ENCODE measurements at regions of chr2 and their contacts with region 1.

Region 1: GRCh38 chr2:165015052-165015642 is 59.8 kb upstream of the SLC38A11 start:
- DNase-seq: peak; percentile 48 to 83 (median 67)
- ATAC-seq: peak; percentile 75 to 93 (median 90)
- H3K4me3 ChIP-seq: no peak overlapping the region
- H3K27ac ChIP-seq: no peak overlapping the region
- H3K4me1 ChIP-seq: peaks cover 0 to 4% (median 0%) of the 10 kb centered on the region in 3 donors
- H3K27me3 ChIP-seq: no peaks in the 10 kb centered on the region
- CTCF ChIP-seq: peak; percentile 58 to 84 (median 78)

Region 2: GRCh38 chr2:164044637-164045036 is 970.5 kb before region 1 on chr2:
- intact Hi-C with region 1: no loop called
- DNase-seq: no peak
- ATAC-seq: peak in 1 of 4 donors; percentile 37
- H3K4me3 ChIP-seq: no peak overlapping the region
- H3K27ac ChIP-seq: no peak overlapping the region
- H3K4me1 ChIP-seq: no peaks in the 10 kb centered on the region
- H3K27me3 ChIP-seq: no peaks in the 10 kb centered on the region
- CTCF ChIP-seq: no peak

Region 3: GRCh38 chr2:164785457-164785856 is 229.7 kb before region 1 on chr2:
- intact Hi-C with region 1: no loop called
- DNase-seq: no peak
- ATAC-seq: peak in 2 of 4 donors; percentile 17 to 27
- H3K4me3 ChIP-seq: no peak overlapping the region
- H3K27ac ChIP-seq: peak overlapping the region in 1 of 4 donors; percentile 51
- H3K4me1 ChIP-seq: peaks cover 6 to 31% (median 25%) of the 10 kb centered on the region in 3 donors
- H3K27me3 ChIP-seq: no peaks in the 10 kb centered on the region
- CTCF ChIP-seq: no peak

Region 4: GRCh38 chr2:165203689-165204559 is 188.8 kb after region 1 on chr2 and contains the start of gene SCN3A:
- intact Hi-C with region 1: loop called in 2 of 3 experiments (anchors 10 kb)
- DNase-seq: peak in 3 of 6 donors; percentile 4 to 28 (median 15)
- ATAC-seq: peak; percentile 38 to 86 (median 74)
- H3K4me3 ChIP-seq: no peak within 1 kb of the TSS
- H3K27ac ChIP-seq: no peak within 1 kb of the TSS
- H3K4me1 ChIP-seq: no peaks in the 10 kb centered on the region
- H3K27me3 ChIP-seq: no peaks in the 10 kb centered on the region
- CTCF ChIP-seq: peak in 3 of 4 donors; percentile 26 to 49 (median 48)
- total RNA-seq, gene SCN3A: 0.08 to 1.2 (median 0.38) TPM

Region 5: GRCh38 chr2:165281387-165281786 is 266.2 kb after region 1 on chr2:
- intact Hi-C with region 1: no loop called
- DNase-seq: no peak
- ATAC-seq: no peak
- H3K4me3 ChIP-seq: no peak overlapping the region
- H3K27ac ChIP-seq: no peak overlapping the region
- H3K4me1 ChIP-seq: no peaks in the 10 kb centered on the region
- H3K27me3 ChIP-seq: no peaks in the 10 kb centered on the region
- CTCF ChIP-seq: no peak

Measured in pancreas (tissue), 10 donors.